CD8-positive, alpha-beta T cell (primary cell): ENCODE measurements at regions of chr5 and their contacts with region 1.

Region 1: GRCh38 chr5:151651997-151652645 is 34.6 kb downstream of the SPARC start:
- DNase-seq: peak; percentile 38 to 79 (median 56)
- ATAC-seq: peak; percentile 92
- H3K4me3 ChIP-seq: no peak overlapping the region
- H3K4me3 Mint-ChIP-seq: no peak overlapping the region
- H3K27ac ChIP-seq: no peak overlapping the region
- H3K27ac Mint-ChIP-seq: no peak overlapping the region
- H3K4me1 ChIP-seq: no peaks in the 10 kb centered on the region
- H3K4me1 Mint-ChIP-seq: peaks cover 5% of the 10 kb centered on the region
- H3K27me3 ChIP-seq: no peaks in the 10 kb centered on the region
- H3K27me3 Mint-ChIP-seq: no peaks in the 10 kb centered on the region
- CTCF ChIP-seq: peak; percentile 64

Region 2: GRCh38 chr5:151174612-151175101 is 477.5 kb before region 1 on chr5:
- CTCF ChIA-PET with region 1: no interaction called
- POLR2A ChIA-PET with region 1: no interaction called
- intact Hi-C with region 1: no loop called
- DNase-seq: peak in 1 of 9 experiments; percentile 34
- ATAC-seq: no peak
- H3K4me3 ChIP-seq: no peak overlapping the region
- H3K4me3 Mint-ChIP-seq: no peak overlapping the region
- H3K27ac ChIP-seq: no peak overlapping the region
- H3K27ac Mint-ChIP-seq: peak overlapping the region; percentile 73
- H3K4me1 ChIP-seq: peaks cover 5% of the 10 kb centered on the region
- H3K4me1 Mint-ChIP-seq: peaks cover 33% of the 10 kb centered on the region
- H3K27me3 ChIP-seq: no peaks in the 10 kb centered on the region
- H3K27me3 Mint-ChIP-seq: no peaks in the 10 kb centered on the region
- CTCF ChIP-seq: no peak

Region 3: GRCh38 chr5:151252762-151253604 is 399.1 kb before region 1 on chr5 and contains the start of gene GM2A:
- CTCF ChIA-PET with region 1: no interaction called
- POLR2A ChIA-PET with region 1: no interaction called
- intact Hi-C with region 1: no loop called
- DNase-seq: peak; percentile 95 to 99 (median 98)
- ATAC-seq: peak; percentile 97
- H3K4me3 ChIP-seq: peak within 1 kb of the TSS; percentile 81 to 82
- H3K4me3 Mint-ChIP-seq: peak within 1 kb of the TSS; percentile 92
- H3K27ac ChIP-seq: peak within 1 kb of the TSS; percentile 57 to 77
- H3K27ac Mint-ChIP-seq: peak within 1 kb of the TSS; percentile 93
- H3K4me1 ChIP-seq: peaks cover 25% of the 10 kb centered on the region
- H3K4me1 Mint-ChIP-seq: peaks cover 45% of the 10 kb centered on the region
- H3K27me3 ChIP-seq: no peaks in the 10 kb centered on the region
- H3K27me3 Mint-ChIP-seq: no peaks in the 10 kb centered on the region
- CTCF ChIP-seq: no peak
- total RNA-seq, gene GM2A: 3.4 to 5.0 TPM

Region 4: GRCh38 chr5:151461312-151461711 is 190.8 kb before region 1 on chr5:
- CTCF ChIA-PET with region 1: interaction called, 11 read pairs
- POLR2A ChIA-PET with region 1: no interaction called
- intact Hi-C with region 1: no loop called
- DNase-seq: no peak
- ATAC-seq: no peak
- H3K4me3 ChIP-seq: no peak overlapping the region
- H3K4me3 Mint-ChIP-seq: no peak overlapping the region
- H3K27ac ChIP-seq: no peak overlapping the region
- H3K27ac Mint-ChIP-seq: no peak overlapping the region
- H3K4me1 ChIP-seq: no peaks in the 10 kb centered on the region
- H3K4me1 Mint-ChIP-seq: peaks cover 2% of the 10 kb centered on the region
- H3K27me3 ChIP-seq: no peaks in the 10 kb centered on the region
- H3K27me3 Mint-ChIP-seq: no peaks in the 10 kb centered on the region
- CTCF ChIP-seq: no peak

Region 5: GRCh38 chr5:151499501-151500035 is 152.6 kb before region 1 on chr5:
- CTCF ChIA-PET with region 1: interaction called, 7 read pairs
- POLR2A ChIA-PET with region 1: no interaction called
- intact Hi-C with region 1: loop called in 1 of 2 experiments (anchors 1 kb)
- DNase-seq: no peak
- ATAC-seq: no peak
- H3K4me3 ChIP-seq: no peak overlapping the region
- H3K4me3 Mint-ChIP-seq: no peak overlapping the region
- H3K27ac ChIP-seq: no peak overlapping the region
- H3K27ac Mint-ChIP-seq: no peak overlapping the region
- H3K4me1 ChIP-seq: no peaks in the 10 kb centered on the region
- H3K4me1 Mint-ChIP-seq: peaks cover 5% of the 10 kb centered on the region
- H3K27me3 ChIP-seq: no peaks in the 10 kb centered on the region
- H3K27me3 Mint-ChIP-seq: no peaks in the 10 kb centered on the region
- CTCF ChIP-seq: no peak

Region 6: GRCh38 chr5:151523335-151523734 is 128.8 kb before region 1 on chr5:
- CTCF ChIA-PET with region 1: interaction called, 7 read pairs
- POLR2A ChIA-PET with region 1: no interaction called
- intact Hi-C with region 1: loop called in 1 of 2 experiments (anchors 1 kb)
- DNase-seq: peak in 2 of 9 experiments; percentile 36 to 51
- ATAC-seq: peak; percentile 52
- H3K4me3 ChIP-seq: no peak overlapping the region
- H3K4me3 Mint-ChIP-seq: no peak overlapping the region
- H3K27ac ChIP-seq: no peak overlapping the region
- H3K27ac Mint-ChIP-seq: no peak overlapping the region
- H3K4me1 ChIP-seq: no peaks in the 10 kb centered on the region
- H3K4me1 Mint-ChIP-seq: no peaks in the 10 kb centered on the region
- H3K27me3 ChIP-seq: no peaks in the 10 kb centered on the region
- H3K27me3 Mint-ChIP-seq: no peaks in the 10 kb centered on the region
- CTCF ChIP-seq: peak; percentile 40

Region 7: GRCh38 chr5:151637676-151638075 is 14.4 kb before region 1 on chr5:
- CTCF ChIA-PET with region 1: interaction called, 14 read pairs
- POLR2A ChIA-PET with region 1: interaction called, 3 read pairs
- intact Hi-C with region 1: no loop called
- DNase-seq: no peak
- ATAC-seq: no peak
- H3K4me3 ChIP-seq: no peak overlapping the region
- H3K4me3 Mint-ChIP-seq: no peak overlapping the region
- H3K27ac ChIP-seq: no peak overlapping the region
- H3K27ac Mint-ChIP-seq: no peak overlapping the region
- H3K4me1 ChIP-seq: peaks cover 9% of the 10 kb centered on the region
- H3K4me1 Mint-ChIP-seq: peaks cover 6% of the 10 kb centered on the region
- H3K27me3 ChIP-seq: peaks cover 0 to 3% of the 10 kb centered on the region in 2 experiments
- H3K27me3 Mint-ChIP-seq: peaks cover 5% of the 10 kb centered on the region
- CTCF ChIP-seq: no peak